ENCODE measurements at regions of chr2 and their contacts with region 1.

Region 1: GRCh38 chr2:210195101-210195852 is 24.1 kb upstream of the KANSL1L start:
- H3K4me3 Mint-ChIP-seq: no peak overlapping the region
- H3K27ac Mint-ChIP-seq: no peak overlapping the region
- H3K4me1 Mint-ChIP-seq: no peaks in the 10 kb centered on the region
- H3K27me3 Mint-ChIP-seq: no peaks in the 10 kb centered on the region

Region 2: DNA sequence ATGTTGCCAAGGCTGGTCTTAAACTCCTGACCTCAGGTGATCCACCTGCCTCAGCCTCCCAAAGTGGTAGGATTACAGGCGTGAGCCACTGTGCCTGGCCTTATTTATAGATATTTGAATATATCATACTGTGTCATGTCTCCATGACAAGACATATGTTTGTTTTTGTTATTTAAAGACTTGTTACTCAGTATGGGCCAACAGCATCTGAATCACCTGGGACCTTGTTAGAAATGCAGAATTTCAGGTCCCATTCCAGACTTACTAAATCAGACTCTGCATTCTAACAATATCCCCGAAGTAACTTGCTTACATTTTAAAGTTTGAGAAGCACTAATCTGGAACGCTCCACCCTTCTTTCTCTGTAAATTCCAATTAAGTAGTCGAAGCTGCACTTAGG is 159.6 kb before region 1 on chr2:
- intact Hi-C with region 1: no loop called
- H3K4me3 Mint-ChIP-seq: no peak overlapping the region
- H3K27ac Mint-ChIP-seq: no peak overlapping the region
- H3K4me1 Mint-ChIP-seq: peaks cover 8% of the 10 kb centered on the region
- H3K27me3 Mint-ChIP-seq: no peaks in the 10 kb centered on the region

Region 3: GRCh38 chr2:210072922-210073509 is 122.3 kb before region 1 on chr2:
- intact Hi-C with region 1: loop called (anchors 1 kb)
- H3K4me3 Mint-ChIP-seq: no peak overlapping the region
- H3K27ac Mint-ChIP-seq: no peak overlapping the region
- H3K4me1 Mint-ChIP-seq: no peaks in the 10 kb centered on the region
- H3K27me3 Mint-ChIP-seq: no peaks in the 10 kb centered on the region